OCI-LY7 (cell line): ENCODE measurements at regions of chr11 and their contacts with region 1.

Region 1: GRCh38 chr11:125348674-125349309 is 147.3 kb downstream of the FEZ1 start:
- DNase-seq: peak; percentile 31
- H3K4me3 ChIP-seq: no peak overlapping the region
- H3K27ac ChIP-seq: no peak overlapping the region
- H3K4me1 ChIP-seq: no peaks in the 10 kb centered on the region
- CTCF ChIP-seq: peak; percentile 87

Region 2: GRCh38 chr11:125091247-125091876 is 257.4 kb before region 1 on chr11:
- CTCF ChIA-PET with region 1: no interaction called
- POLR2A ChIA-PET with region 1: no interaction called
- intact Hi-C with region 1: loop called (anchors 2 kb)
- DNase-seq: peak; percentile 62
- H3K4me3 ChIP-seq: no peak overlapping the region
- H3K27ac ChIP-seq: no peak overlapping the region
- H3K4me1 ChIP-seq: no peaks in the 10 kb centered on the region
- CTCF ChIP-seq: peak; percentile 86

Region 3: GRCh38 chr11:125443767-125444311 is 95.0 kb after region 1 on chr11:
- CTCF ChIA-PET with region 1: no interaction called
- POLR2A ChIA-PET with region 1: no interaction called
- intact Hi-C with region 1: no loop called
- DNase-seq: no peak
- H3K4me3 ChIP-seq: no peak overlapping the region
- H3K27ac ChIP-seq: no peak overlapping the region
- H3K4me1 ChIP-seq: no peaks in the 10 kb centered on the region
- CTCF ChIP-seq: no peak

Region 4: GRCh38 chr11:125768336-125769046 is 419.7 kb after region 1 on chr11:
- CTCF ChIA-PET with region 1: no interaction called
- POLR2A ChIA-PET with region 1: no interaction called
- intact Hi-C with region 1: no loop called
- DNase-seq: no peak
- H3K4me3 ChIP-seq: no peak overlapping the region
- H3K27ac ChIP-seq: no peak overlapping the region
- H3K4me1 ChIP-seq: no peaks in the 10 kb centered on the region
- CTCF ChIP-seq: no peak